Activated CD4-positive, alpha-beta T cell treated with anti-CD3 and anti-CD28 coated beads for 36 hours (primary cell): ENCODE measurements at regions of chr6 and their contacts with region 1.

Region 1: GRCh38 chr6:79233611-79234149 is 802 bp downstream of the HMGN3 start:
- DNase-seq: peak; percentile 83
- ATAC-seq: peak; percentile 68
- H3K4me3 Mint-ChIP-seq: peak overlapping the region; percentile 98
- H3K27ac Mint-ChIP-seq: peak overlapping the region; percentile 92
- H3K4me1 Mint-ChIP-seq: peaks cover 16% of the 10 kb centered on the region
- H3K27me3 Mint-ChIP-seq: peaks cover 2% of the 10 kb centered on the region

Region 2: DNA sequence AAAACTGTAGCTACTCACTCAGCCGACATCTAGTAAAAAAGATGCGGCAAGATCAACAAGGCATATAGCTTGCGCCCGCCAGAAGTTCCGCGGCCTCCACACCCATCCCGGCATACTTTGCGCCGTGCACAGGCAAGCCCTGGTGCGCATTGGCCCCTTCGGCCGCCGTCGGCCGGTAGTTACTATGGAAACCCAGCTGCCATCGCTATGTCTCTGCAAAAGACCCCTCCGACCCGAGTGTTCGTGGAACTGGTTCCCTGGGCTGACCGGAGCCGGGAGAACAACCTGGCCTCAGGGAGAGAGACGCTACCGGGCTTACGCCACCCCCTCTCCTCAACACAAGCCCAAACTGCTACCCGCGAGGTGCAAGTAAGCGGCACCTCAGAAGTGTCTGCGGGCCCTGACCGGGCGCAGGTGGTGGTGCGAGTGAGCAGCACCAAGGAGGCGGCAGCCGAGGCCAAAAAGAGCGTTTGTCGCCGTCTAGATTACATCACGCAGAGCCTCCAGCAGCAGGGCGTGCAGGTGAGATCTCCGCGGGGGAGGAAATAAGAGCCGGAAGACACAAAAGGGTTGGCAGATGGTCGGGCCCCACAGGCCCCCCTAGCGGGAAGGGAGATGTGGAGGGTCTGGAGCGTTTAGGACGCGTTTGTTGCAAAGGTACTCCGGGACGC is 366.2 kb before region 1 on chr6 and contains the start of gene IRAK1BP1:
- CTCF ChIA-PET with region 1: no interaction called
- POLR2A ChIA-PET with region 1: no interaction called
- intact Hi-C with region 1: loop called in 1 of 2 experiments (anchors 2 kb)
- DNase-seq: peak; percentile 93
- ATAC-seq: peak; percentile 99
- H3K4me3 Mint-ChIP-seq: peak within 1 kb of the TSS; percentile 92
- H3K27ac Mint-ChIP-seq: peak within 1 kb of the TSS; percentile 79
- H3K4me1 Mint-ChIP-seq: peaks cover 15% of the 10 kb centered on the region
- H3K27me3 Mint-ChIP-seq: no peaks in the 10 kb centered on the region
- total RNA-seq, gene IRAK1BP1: 1.6 to 2.7 TPM

Region 3: DNA sequence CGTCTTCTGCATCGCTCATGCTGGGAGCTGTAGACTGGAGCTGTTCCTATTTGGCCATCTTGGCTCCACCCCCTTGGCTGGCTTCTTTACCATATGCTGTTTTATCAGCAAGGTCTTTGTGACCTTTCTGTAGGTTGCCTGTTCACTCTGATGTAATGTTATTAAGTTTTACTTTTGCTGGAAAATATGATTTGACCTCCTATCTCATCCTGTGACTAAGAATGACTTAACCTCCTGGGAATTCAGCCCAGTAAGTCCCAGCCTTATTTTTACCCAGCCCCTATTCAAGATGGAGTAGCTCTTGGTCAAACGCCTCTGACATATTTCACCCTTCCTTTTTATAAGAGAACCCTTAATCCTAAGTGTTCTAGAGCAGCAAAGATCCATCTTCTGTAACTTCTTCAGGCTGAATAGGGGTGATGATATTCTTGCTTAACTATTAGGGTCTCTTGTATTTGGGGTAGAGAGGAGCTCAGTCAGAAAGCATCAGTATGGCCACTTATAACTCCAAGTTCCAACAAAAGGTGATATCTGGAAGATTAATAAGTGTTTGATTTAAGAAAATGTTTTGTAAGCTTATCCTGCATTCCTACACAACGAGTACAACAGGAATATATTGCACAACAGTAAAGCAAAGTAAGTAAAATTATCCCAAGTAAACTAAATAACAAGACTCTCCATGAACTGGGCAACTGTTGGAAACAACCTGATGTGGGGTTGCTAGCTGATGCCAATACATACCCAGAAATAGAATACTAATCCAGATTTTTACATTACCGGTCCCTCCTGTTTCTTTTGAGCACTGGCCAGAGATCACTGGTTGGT is 23.9 kb after region 1 on chr6:
- CTCF ChIA-PET with region 1: no interaction called
- POLR2A ChIA-PET with region 1: no interaction called
- intact Hi-C with region 1: no loop called
- DNase-seq: peak; percentile 22
- ATAC-seq: no peak
- H3K4me3 Mint-ChIP-seq: no peak overlapping the region
- H3K27ac Mint-ChIP-seq: no peak overlapping the region
- H3K4me1 Mint-ChIP-seq: no peaks in the 10 kb centered on the region
- H3K27me3 Mint-ChIP-seq: peaks cover 13% of the 10 kb centered on the region

Region 4: DNA sequence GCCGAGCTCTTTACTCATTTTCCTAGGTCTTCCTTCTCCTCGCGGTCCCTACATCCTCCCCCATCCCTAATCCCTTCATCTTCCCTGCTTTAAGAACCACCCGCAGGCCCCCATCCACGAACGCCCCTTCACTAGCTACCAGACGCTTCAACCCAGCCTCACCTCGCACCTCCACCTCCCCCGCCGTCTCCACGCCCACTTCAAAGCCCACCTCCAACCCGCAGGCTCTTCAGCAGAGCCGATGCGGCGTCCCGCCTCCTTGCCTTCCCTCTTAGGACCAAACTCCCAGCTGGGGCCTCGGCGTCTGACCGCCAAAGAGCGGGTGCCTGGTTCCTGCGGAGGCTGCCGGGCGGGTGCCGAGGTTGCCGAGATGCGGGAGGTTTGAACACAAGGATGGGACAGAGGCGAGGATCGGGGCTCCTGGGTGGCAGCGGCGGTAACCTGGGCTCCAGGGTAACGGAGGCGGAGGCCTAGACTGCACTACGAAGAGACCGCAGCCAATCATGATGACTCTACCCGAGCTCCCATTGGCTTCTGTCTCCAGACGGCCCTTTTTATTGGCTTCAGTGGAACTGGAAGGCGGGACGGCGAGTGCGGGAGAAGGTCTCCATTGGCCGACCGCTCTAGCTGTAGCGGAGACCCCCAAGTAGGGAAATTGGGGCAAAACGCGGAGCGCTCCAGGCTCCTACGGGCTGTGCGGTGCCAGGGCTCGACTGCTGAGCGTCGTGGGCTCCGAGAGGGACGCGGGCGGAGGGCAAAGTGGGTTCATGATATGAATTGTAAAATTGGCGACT is 303.5 kb after region 1 on chr6 and contains the start of gene LCA5:
- CTCF ChIA-PET with region 1: no interaction called
- POLR2A ChIA-PET with region 1: no interaction called
- intact Hi-C with region 1: loop called (anchors 1 to 5 kb)
- DNase-seq: peak; percentile 90
- ATAC-seq: peak; percentile 100
- H3K4me3 Mint-ChIP-seq: no peak within 1 kb of the TSS
- H3K27ac Mint-ChIP-seq: no peak within 1 kb of the TSS
- H3K4me1 Mint-ChIP-seq: no peaks in the 10 kb centered on the region
- H3K27me3 Mint-ChIP-seq: peaks cover 8% of the 10 kb centered on the region
- total RNA-seq, gene LCA5: 0.25 to 0.32 TPM

Region 5: GRCh38 chr6:79672631-79673111 is 439.0 kb after region 1 on chr6:
- CTCF ChIA-PET with region 1: no interaction called
- POLR2A ChIA-PET with region 1: no interaction called
- intact Hi-C with region 1: loop called in 1 of 2 experiments (anchors 5 kb)
- DNase-seq: no peak
- ATAC-seq: peak; percentile 28
- H3K4me3 Mint-ChIP-seq: no peak overlapping the region
- H3K27ac Mint-ChIP-seq: peak overlapping the region; percentile 74
- H3K4me1 Mint-ChIP-seq: peaks cover 31% of the 10 kb centered on the region
- H3K27me3 Mint-ChIP-seq: no peaks in the 10 kb centered on the region